Activated naive CD4-positive, alpha-beta T cell treated with anti-CD3 and anti-CD28 coated beads, Interleukin-2, amount 10 ng/mL, durations not matched to agents 7 days and 5 days (primary cell): ENCODE measurements at regions of chr9 and their contacts with region 1.

Region 1: DNA sequence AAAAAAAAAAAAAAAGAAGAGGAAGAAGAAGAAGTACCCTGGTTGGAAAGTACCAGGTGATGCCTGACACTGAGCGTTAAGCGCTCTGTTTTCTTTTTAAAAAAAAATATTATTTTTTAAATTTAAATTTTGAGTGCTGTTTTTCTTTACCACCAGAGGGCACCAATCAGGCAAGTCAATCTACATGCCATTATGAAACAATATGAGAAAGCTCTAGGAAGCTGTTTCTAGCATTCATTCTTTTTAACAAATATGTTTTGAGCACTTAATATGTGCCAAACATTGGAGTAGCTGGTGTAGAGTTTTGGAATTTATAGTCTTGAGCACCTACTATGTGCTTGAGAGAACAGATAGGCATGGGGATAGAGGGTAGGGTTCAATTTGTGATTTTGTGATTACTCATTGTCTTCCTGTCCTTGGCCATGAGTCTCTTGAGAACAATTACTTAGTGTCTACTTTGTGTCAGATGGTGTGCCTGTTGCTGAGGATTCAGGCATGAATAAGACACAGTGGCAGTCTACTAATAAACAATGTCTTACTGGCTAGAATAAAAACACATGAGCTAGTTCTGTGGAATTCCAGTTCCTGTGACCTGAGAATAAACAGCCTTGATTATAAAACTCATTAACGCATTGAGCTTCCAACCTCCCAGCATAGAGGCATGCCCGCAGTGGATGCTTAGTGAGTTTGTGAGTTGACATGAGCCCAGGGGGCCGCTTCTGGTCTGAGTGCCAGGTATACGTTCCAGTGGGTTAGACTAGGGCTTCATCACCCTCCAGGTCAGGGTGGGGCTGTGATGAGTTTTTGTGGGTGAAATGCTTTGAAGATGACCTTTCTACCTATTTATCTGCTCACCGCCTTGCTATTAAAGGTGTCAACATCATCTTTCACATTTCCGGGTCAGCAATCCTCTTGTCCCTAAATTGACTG is 3.0 kb upstream of the UBE2R2 start:
- DNase-seq: no peak
- H3K4me3 Mint-ChIP-seq: no peak overlapping the region
- H3K27ac Mint-ChIP-seq: peak overlapping the region; percentile 47
- H3K4me1 Mint-ChIP-seq: peaks cover 43% of the 10 kb centered on the region
- H3K27me3 Mint-ChIP-seq: peaks cover 15% of the 10 kb centered on the region

Region 2: DNA sequence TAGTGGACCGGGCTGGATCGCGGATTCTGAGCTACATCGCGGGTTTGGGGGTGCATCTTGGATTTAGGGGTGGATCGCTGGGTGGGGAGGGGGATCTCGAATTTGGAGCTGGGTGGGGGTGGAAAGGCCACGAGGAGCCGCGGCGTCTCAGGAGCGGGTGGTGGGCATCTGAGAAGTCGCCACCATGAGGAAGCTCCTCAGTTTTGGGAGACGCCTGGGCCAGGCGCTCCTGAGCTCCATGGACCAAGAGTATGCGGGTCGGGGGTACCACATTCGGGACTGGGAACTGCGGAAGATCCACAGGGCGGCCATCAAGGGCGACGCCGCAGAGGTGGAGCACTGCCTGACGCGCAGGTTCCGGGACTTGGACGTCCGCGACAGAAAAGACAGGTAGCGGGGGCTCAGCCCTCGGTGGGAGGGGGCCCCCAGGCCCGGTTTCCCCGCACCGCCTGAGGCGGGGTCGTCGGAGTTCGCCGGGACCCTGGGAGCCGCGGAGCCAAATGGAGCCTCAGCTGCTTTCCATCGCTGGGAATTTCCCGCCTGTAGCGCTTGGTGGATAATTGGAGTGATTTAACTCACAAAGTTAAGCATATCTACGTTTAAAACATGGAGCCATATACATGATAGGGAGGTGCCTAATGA is 289.6 kb before region 1 on chr9:
- CTCF ChIA-PET with region 1: no interaction called
- DNase-seq: peak; percentile 39
- H3K4me3 Mint-ChIP-seq: peak overlapping the region; percentile 79
- H3K27ac Mint-ChIP-seq: no peak overlapping the region
- H3K4me1 Mint-ChIP-seq: peaks cover 11% of the 10 kb centered on the region
- H3K27me3 Mint-ChIP-seq: peaks cover 66% of the 10 kb centered on the region

Region 3: DNA sequence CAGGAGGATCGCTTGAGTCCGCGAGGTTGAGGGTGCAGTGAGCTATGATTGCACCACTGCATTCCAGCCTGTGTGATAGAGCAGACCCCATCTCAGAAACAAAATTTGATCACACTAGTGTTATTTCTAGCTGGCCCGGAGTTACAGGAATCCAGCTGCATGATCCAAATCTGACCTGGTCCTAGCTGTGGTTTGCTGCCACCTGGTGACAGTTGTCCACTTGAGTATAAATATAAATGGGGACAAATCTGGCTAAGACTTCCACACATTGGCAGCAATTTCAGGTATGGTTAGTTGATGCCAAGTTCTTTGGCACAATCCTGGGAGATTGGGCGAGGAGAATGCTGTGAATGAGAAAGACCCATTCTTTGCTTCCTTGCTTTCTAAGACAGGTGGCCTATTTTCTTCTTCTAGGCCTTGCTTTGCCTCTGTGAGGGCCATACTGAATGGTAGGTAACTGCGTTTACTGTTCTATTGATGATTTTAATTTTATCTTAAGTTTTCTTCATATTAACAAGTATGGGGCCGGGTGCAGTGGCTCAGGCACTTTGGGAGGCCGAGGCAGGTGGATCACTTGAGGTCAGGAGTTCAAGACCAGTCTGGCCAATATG is 38.3 kb after region 1 on chr9:
- CTCF ChIA-PET with region 1: interaction called, 10 read pairs
- DNase-seq: peak; percentile 69
- H3K4me3 Mint-ChIP-seq: no peak overlapping the region
- H3K27ac Mint-ChIP-seq: no peak overlapping the region
- H3K4me1 Mint-ChIP-seq: peaks cover 22% of the 10 kb centered on the region
- H3K27me3 Mint-ChIP-seq: no peaks in the 10 kb centered on the region

Region 4: GRCh38 chr9:33924978-33925797 is 111.2 kb after region 1 on chr9:
- CTCF ChIA-PET with region 1: interaction called, 38 read pairs
- DNase-seq: peak; percentile 46
- H3K4me3 Mint-ChIP-seq: no peak overlapping the region
- H3K27ac Mint-ChIP-seq: peak overlapping the region; percentile 37
- H3K4me1 Mint-ChIP-seq: no peaks in the 10 kb centered on the region
- H3K27me3 Mint-ChIP-seq: no peaks in the 10 kb centered on the region